Activated B cell treated with CpG ODN at 0.5 μM for 24 hours (primary cell): ENCODE measurements at regions of chr11 and their contacts with region 1.

Region 1: GRCh38 chr11:69686452-69686851 is 11.3 kb upstream of the LTO1 start:
- DNase-seq: no peak
- ATAC-seq: no peak
- H3K4me3 Mint-ChIP-seq: no peak overlapping the region
- H3K27ac Mint-ChIP-seq: no peak overlapping the region
- H3K4me1 Mint-ChIP-seq: peaks cover 9% of the 10 kb centered on the region
- H3K27me3 Mint-ChIP-seq: peaks cover 26% of the 10 kb centered on the region
- CTCF ChIP-seq: no peak

Region 2: GRCh38 chr11:69760319-69760718 is 73.9 kb after region 1 on chr11:
- CTCF ChIA-PET with region 1: no interaction called
- POLR2A ChIA-PET with region 1: no interaction called
- intact Hi-C with region 1: no loop called
- DNase-seq: no peak
- ATAC-seq: no peak
- H3K4me3 Mint-ChIP-seq: no peak overlapping the region
- H3K27ac Mint-ChIP-seq: no peak overlapping the region
- H3K4me1 Mint-ChIP-seq: no peaks in the 10 kb centered on the region
- H3K27me3 Mint-ChIP-seq: peaks cover 9% of the 10 kb centered on the region
- CTCF ChIP-seq: no peak

Region 3: DNA sequence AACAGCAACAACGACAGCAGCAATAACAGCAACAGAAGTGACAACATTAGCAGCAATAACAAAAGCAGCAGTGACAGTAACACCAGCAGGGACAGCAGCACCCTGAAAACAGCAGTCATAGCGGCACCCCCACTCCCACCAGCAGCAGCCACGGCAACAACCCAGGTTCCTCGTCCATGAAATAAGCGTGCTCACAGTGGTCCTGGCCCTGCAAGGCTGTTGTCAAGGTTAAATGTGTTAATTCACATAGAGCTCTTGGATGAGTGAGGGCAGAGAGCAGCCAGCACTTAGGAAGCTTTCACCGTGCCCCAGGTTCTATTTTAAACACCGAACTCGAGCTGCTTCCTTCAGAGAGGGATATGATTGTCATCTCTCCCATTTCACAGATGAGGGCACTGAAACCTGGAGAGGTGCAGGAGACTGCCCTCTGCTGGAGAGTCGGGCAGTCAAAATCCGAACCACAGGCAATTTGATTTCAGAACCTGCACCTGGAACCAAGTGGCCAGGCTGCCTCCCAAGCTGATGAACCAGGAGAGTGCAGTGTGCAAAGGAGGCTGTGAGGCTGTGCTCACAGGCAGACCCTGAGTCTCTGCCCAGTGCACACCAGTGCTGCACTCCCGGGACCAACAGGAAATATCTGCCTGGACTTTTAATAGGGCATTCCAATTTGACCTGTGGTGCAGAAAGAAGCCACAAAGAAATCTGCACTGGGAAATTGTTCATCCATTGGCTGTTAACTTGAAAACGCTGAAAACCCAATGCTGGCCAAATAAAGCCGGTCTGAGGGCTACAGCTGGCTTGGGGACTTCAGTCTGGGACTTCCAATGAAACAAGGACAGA is 155.6 kb after region 1 on chr11:
- CTCF ChIA-PET with region 1: interaction called, 3 read pairs
- POLR2A ChIA-PET with region 1: no interaction called
- intact Hi-C with region 1: loop called (anchors 1 kb)
- DNase-seq: no peak
- ATAC-seq: no peak
- H3K4me3 Mint-ChIP-seq: no peak overlapping the region
- H3K27ac Mint-ChIP-seq: no peak overlapping the region
- H3K4me1 Mint-ChIP-seq: no peaks in the 10 kb centered on the region
- H3K27me3 Mint-ChIP-seq: peaks cover 14% of the 10 kb centered on the region
- CTCF ChIP-seq: no peak

Region 4: GRCh38 chr11:70191495-70192140 is 505.2 kb after region 1 on chr11:
- CTCF ChIA-PET with region 1: no interaction called
- POLR2A ChIA-PET with region 1: no interaction called
- intact Hi-C with region 1: loop called (anchors 1 kb)
- DNase-seq: peak; percentile 24
- ATAC-seq: peak; percentile 21
- H3K4me3 Mint-ChIP-seq: no peak overlapping the region
- H3K27ac Mint-ChIP-seq: no peak overlapping the region
- H3K4me1 Mint-ChIP-seq: peaks cover 3% of the 10 kb centered on the region
- H3K27me3 Mint-ChIP-seq: peaks cover 7% of the 10 kb centered on the region
- CTCF ChIP-seq: no peak

Region 5: GRCh38 chr11:70471254-70471653 is 784.8 kb after region 1 on chr11:
- CTCF ChIA-PET with region 1: no interaction called
- POLR2A ChIA-PET with region 1: no interaction called
- intact Hi-C with region 1: loop called (anchors 2 kb)
- DNase-seq: no peak
- ATAC-seq: peak; percentile 62
- H3K4me3 Mint-ChIP-seq: no peak overlapping the region
- H3K27ac Mint-ChIP-seq: no peak overlapping the region
- H3K4me1 Mint-ChIP-seq: peaks cover 12% of the 10 kb centered on the region
- H3K27me3 Mint-ChIP-seq: peaks cover 1% of the 10 kb centered on the region
- CTCF ChIP-seq: no peak

Region 6: GRCh38 chr11:70755410-70756161 is 1069.1 kb after region 1 on chr11:
- CTCF ChIA-PET with region 1: no interaction called
- POLR2A ChIA-PET with region 1: no interaction called
- intact Hi-C with region 1: loop called (anchors 5 kb)
- DNase-seq: peak; percentile 42
- ATAC-seq: peak; percentile 42
- H3K4me3 Mint-ChIP-seq: no peak overlapping the region
- H3K27ac Mint-ChIP-seq: no peak overlapping the region
- H3K4me1 Mint-ChIP-seq: no peaks in the 10 kb centered on the region
- H3K27me3 Mint-ChIP-seq: peaks cover 12% of the 10 kb centered on the region
- CTCF ChIP-seq: peak; percentile 40